ENCODE measurements at regions of chrX and their contacts with region 1.

Region 1: GRCh38 chrX:131830400-131831184 is 192.5 kb upstream of the STK26 start:
- DNase-seq: peak; percentile 40
- H3K4me3 Mint-ChIP-seq: peak overlapping the region; percentile 95
- H3K27ac Mint-ChIP-seq: peak overlapping the region; percentile 91
- H3K4me1 Mint-ChIP-seq: peaks cover 34% of the 10 kb centered on the region
- H3K27me3 Mint-ChIP-seq: no peaks in the 10 kb centered on the region

Region 2: DNA sequence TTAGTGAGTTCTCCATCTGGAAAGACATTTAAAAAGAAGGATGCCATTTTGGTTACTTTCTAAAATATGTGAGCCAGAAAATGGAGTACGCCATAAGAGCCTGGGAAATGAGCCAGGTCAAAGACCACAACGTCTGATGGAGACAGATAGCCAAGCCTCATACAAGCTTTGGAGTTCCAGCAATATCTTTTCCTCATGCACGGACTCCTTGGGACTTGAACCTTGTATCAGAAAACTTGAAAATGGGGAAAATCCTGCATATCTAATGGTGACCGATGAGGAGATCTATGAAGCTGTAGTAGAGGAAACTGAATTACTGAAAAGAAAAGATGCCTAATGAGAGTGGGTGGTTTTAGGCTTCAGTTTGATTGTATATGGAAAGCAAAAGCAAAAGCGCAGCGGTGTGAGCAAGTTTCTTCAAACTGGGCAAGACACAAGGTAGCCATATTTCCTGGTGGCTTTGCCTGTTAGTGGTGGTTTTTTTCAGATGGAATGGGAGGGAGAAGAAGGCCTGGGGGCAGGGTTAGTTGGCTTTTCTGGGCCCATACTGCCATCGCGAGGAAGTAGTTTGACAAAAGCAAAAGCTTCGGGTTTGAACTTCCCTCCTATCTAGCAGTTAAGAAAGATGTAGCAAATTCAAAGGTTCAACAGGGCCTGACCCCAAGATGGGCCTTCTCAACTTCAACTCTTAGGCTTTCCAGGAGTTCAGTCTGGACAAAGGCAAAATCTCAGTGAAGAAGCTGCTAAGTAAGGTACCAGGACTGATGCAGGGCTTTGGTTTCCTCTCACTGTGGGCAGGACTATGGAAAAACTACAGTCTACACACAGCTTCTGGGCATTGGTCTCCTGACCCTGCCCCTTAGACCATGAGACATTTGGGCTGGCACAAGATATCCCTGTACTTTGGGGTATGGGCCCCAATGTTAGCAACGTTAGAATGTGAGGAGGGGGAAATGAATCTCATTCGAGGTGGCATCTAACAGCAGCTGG is 17.5 kb before region 1 on chrX:
- intact Hi-C with region 1: loop called (anchors 1 kb)
- DNase-seq: peak; percentile 63
- H3K4me3 Mint-ChIP-seq: peak overlapping the region; percentile 76
- H3K27ac Mint-ChIP-seq: peak overlapping the region; percentile 89
- H3K4me1 Mint-ChIP-seq: peaks cover 36% of the 10 kb centered on the region
- H3K27me3 Mint-ChIP-seq: no peaks in the 10 kb centered on the region

Region 3: GRCh38 chrX:132022967-132023895 is 192.6 kb after region 1 on chrX and contains the start of gene STK26:
- intact Hi-C with region 1: loop called (anchors 1 kb)
- DNase-seq: peak; percentile 75
- H3K4me3 Mint-ChIP-seq: peak within 1 kb of the TSS; percentile 94
- H3K27ac Mint-ChIP-seq: peak within 1 kb of the TSS; percentile 92
- H3K4me1 Mint-ChIP-seq: peaks cover 30% of the 10 kb centered on the region
- H3K27me3 Mint-ChIP-seq: no peaks in the 10 kb centered on the region
- total RNA-seq, gene STK26: 57.1 and 59.3 TPM in 2 replicates

Region 4: DNA sequence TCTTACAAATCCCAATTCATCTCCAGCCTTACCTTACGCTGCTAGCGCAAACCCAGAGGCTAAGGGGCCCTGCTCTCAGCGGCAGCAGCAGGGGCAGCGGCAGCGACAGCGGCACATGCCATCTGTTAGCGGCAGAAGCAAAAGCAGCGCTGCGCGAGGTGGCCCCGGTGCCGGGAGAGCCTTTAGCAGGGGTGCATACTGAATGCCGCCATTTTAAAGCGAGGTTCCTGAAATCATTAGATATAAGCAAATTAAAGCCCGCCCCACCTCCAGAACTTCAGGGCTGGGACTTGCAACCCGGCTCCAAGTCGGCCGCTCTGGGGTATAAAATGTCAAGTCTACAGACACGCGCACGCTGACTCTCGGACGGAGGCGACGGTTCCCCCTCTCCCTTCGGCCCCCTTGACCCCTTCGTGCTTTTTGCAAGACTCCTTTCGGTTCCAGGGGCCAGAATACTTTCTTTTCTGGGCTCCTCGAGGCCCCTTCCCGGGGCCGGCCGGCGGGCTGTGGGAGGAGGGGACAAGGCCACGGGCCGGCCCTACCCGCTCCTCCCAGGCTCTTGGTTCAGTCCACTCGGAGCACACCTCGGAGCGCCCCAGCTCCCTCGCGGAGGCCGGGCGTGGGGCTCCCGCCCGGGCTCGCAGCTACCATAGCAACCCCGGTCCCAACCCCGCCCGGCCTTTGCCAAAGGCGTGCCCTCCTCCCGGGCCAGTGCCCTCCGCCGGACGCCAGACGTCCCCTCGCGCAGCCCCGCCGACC is 658.4 kb after region 1 on chrX and contains the start of gene MBNL3:
- intact Hi-C with region 1: loop called (anchors 2 kb)
- DNase-seq: peak; percentile 45
- H3K4me3 Mint-ChIP-seq: peak within 1 kb of the TSS; percentile 95
- H3K27ac Mint-ChIP-seq: peak within 1 kb of the TSS; percentile 94
- H3K4me1 Mint-ChIP-seq: peaks cover 28% of the 10 kb centered on the region
- H3K27me3 Mint-ChIP-seq: peaks cover 7% of the 10 kb centered on the region
- total RNA-seq, gene MBNL3: 8.9 and 12.3 TPM in 2 replicates

Region 5: DNA sequence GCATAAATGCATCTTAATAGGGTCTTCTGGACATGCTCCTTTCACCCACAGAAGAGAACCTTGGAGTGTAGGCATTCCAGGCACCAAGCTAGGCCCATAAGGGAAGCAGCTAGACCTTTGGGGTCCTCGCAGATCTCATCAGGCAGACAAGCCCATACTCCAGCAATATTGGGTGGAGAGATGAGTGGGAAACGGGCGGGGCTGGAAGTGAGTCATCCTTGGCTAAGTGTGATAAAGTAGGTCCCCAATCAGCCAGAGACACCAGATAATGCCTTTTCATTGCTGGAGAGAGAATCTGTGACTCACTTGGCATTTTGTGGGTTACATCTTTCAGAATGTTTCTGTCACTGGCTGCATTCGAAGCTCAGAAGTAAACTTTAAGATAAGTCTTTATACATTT is 791.5 kb after region 1 on chrX:
- intact Hi-C with region 1: loop called (anchors 2 kb)
- DNase-seq: peak; percentile 1
- H3K4me3 Mint-ChIP-seq: no peak overlapping the region
- H3K27ac Mint-ChIP-seq: no peak overlapping the region
- H3K4me1 Mint-ChIP-seq: peaks cover 5% of the 10 kb centered on the region
- H3K27me3 Mint-ChIP-seq: no peaks in the 10 kb centered on the region

Region 6: DNA sequence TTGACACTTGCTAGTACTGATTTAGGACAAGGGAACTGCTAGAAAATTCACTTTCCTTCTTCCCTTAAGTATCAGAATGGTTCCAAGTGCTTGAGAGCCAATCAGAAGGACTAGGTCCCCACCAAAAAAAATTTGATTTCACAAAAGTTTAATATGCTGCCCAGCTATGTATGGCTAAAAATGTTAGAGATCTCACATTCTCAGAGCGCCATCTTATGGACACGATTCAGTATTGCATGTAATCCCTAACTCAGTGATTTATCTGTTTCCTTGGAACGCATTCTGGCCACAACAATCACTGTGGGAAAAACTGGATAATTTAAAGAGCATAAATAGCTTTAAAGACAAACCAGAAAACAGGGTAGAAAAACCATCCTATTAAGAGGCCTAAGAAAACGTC is 1839.8 kb after region 1 on chrX:
- intact Hi-C with region 1: loop called (anchors 5 kb)
- DNase-seq: no peak
- H3K4me3 Mint-ChIP-seq: no peak overlapping the region
- H3K27ac Mint-ChIP-seq: no peak overlapping the region
- H3K4me1 Mint-ChIP-seq: no peaks in the 10 kb centered on the region
- H3K27me3 Mint-ChIP-seq: no peaks in the 10 kb centered on the region

Region 7: GRCh38 chrX:133792198-133792953 is 1961.8 kb after region 1 on chrX:
- intact Hi-C with region 1: loop called (anchors 5 kb)
- DNase-seq: peak; percentile 19
- H3K4me3 Mint-ChIP-seq: no peak overlapping the region
- H3K27ac Mint-ChIP-seq: no peak overlapping the region
- H3K4me1 Mint-ChIP-seq: no peaks in the 10 kb centered on the region
- H3K27me3 Mint-ChIP-seq: peaks cover 9% of the 10 kb centered on the region

Measured in activated T-helper 1 cell treated with anti-CD3 and anti-CD28 coated beads, Interleukin-12 subunit alpha, Interleukin-12 subunit beta, Interleukin-2, Interleukin-4 antibody, amounts not matched to agents 30 ng/mL and 10 ng/mL and 1 ng/mL, durations not matched to agents 14 hours and 24 hours and 36 hours (primary cell).